Tibial artery (tissue), 4 donors: ENCODE measurements at regions of chr1 and their contacts with region 1.

Region 1: DNA sequence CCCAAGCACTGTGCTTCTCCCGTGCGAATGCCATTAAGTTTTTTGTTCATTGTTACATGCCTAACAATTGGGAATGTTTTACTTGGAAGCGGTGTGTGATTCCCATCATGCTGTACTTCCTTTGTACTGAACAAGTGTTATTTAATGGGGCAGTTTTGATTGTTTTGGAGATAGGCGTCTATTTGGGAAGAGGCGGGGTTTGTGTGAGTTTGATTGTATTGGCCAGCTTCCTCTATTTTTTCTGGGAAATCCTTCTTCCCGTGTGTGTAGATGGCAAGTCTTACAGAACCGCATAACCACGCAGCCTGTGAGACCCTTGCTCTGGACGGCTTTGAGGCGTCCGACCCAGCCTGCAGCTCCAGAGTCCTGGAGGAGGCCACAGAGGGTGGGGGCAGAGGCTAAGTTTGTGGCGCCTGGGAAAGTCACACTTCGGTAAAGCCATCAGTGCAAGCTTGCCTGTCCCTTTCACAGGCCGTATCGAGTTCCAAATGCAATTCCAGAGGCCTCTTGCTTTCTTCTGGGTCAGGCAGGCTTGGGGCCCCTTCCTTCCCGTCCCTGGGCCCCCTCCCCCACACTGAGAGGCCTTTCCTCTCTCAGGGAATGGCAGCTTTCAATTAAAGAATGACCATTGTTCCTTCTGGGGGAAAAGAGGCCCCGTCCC is 210.3 kb downstream of the TOMM20 start:
- DNase-seq: peak in 1 of 2 donors; percentile 74
- H3K4me3 ChIP-seq: no peak overlapping the region
- H3K27ac ChIP-seq: peak overlapping the region; percentile 80 to 85
- H3K4me1 ChIP-seq: peaks cover 10 to 87% (median 76%) of the 10 kb centered on the region in 4 donors
- H3K27me3 ChIP-seq: no peaks in the 10 kb centered on the region
- CTCF ChIP-seq: no peak

Region 2: DNA sequence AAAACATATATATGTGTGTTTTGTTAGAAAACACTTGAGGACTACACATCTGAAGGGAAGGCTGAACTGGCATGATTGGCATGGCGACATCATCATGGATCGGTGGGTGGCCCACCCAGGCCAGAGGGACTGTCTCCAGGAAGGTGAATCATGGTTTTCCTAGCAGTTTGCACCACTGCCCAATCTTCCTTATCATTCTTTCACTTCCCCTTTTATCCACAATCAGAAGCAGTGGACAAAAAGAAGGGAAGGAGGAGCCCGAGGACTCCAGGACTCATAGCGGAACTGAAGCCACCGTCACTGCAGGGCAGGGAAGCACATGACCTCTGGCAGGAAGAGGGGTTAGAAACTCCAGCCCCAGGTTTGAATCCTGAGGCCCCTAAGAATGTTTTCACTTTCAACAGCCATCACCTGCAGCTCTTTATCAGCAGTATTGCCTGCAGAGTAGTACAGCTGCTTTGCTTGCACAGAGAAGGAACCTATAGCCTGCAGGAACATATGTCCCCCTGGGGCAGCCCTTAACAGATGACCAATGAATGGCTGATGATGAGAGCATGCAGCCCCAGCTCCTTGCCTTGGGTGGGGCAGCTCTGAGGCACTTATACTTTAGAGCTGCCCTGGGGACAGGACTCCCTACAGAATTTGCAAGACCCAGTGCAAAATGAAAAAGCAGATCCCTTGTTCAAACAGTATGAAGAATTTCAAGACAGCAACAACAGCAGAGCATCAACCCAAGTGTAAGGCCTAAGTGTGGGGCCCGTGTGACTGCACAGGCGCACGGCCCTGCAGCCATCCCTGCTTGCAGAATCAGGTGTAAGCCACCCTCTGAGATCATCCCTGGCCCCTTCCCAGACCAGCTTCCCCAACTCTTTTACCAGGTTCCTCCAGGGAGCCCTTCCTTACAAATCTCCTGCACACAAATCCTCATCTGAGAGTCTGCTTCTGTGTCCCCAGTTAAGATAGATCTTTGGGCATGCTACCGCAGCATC is 66.6 kb before region 1 on chr1:
- intact Hi-C with region 1: no loop called
- DNase-seq: no peak
- H3K4me3 ChIP-seq: no peak overlapping the region
- H3K27ac ChIP-seq: no peak overlapping the region
- H3K4me1 ChIP-seq: no peaks in the 10 kb centered on the region
- H3K27me3 ChIP-seq: no peaks in the 10 kb centered on the region
- CTCF ChIP-seq: no peak

Region 3: GRCh38 chr1:234970731-234971476 is 52.6 kb after region 1 on chr1:
- intact Hi-C with region 1: loop called (anchors 5 kb)
- DNase-seq: peak; percentile 84 to 91
- H3K4me3 ChIP-seq: peak overlapping the region; percentile 30 to 45
- H3K27ac ChIP-seq: peak overlapping the region; percentile 77 to 78
- H3K4me1 ChIP-seq: peaks cover 6 to 59% (median 37%) of the 10 kb centered on the region in 4 donors
- H3K27me3 ChIP-seq: no peaks in the 10 kb centered on the region
- CTCF ChIP-seq: no peak

Region 4: DNA sequence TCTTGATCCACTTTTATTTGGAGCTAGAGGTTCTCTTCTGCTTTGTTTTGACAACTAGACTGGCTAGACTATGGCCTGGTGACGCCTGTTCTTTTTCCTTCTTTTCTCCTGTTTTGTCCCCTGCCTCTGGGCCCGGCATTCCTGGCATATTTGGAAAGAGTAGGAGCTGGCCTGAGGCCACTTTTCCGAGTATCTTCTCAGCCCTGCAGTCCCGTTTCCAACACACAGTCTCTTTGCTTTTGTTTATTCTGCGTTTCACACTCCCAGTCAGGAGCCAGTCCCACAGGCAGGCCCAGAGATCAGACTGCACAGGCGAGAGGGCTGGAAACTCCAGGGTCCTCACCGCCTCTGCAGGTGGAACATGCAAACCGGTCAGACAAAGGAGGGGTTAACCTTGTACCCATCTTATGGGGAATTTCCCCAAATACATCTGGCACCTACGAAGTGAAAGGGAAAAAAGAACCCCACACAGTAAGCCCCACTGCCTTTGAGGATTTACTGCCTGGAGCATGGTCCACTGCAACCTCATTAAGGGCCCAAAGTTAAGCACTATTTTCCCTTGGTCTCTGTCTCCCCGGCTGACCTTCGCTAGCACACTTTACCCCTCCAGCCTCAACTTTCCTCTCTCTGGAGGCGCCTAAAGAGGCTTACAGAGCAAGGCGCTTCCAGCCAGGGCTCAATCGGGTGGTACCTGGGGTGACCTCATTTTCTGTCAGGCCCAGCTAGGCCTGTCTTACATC is 69.3 kb after region 1 on chr1:
- intact Hi-C with region 1: loop called (anchors 2 kb)
- DNase-seq: peak; percentile 85 to 93
- H3K4me3 ChIP-seq: no peak overlapping the region
- H3K27ac ChIP-seq: peak overlapping the region; percentile 87
- H3K4me1 ChIP-seq: peaks cover 3 to 77% (median 50%) of the 10 kb centered on the region in 4 donors
- H3K27me3 ChIP-seq: no peaks in the 10 kb centered on the region
- CTCF ChIP-seq: peak in 1 of 2 experiments; percentile 9

Region 5: GRCh38 chr1:235357485-235358378 is 439.4 kb after region 1 on chr1:
- intact Hi-C with region 1: no loop called
- DNase-seq: no peak
- H3K4me3 ChIP-seq: no peak overlapping the region
- H3K27ac ChIP-seq: no peak overlapping the region
- H3K4me1 ChIP-seq: no peaks in the 10 kb centered on the region
- H3K27me3 ChIP-seq: no peaks in the 10 kb centered on the region
- CTCF ChIP-seq: no peak